ENCODE measurements at regions of chr1 and their contacts with region 1.

Region 1: GRCh38 chr1:47262787-47263413 is 30.9 kb upstream of the TAL1 start:
- DNase-seq: no peak
- H3K4me3 ChIP-seq: no peak overlapping the region
- H3K27ac ChIP-seq: no peak overlapping the region
- H3K27me3 ChIP-seq: no peaks in the 10 kb centered on the region
- CTCF ChIP-seq: peak; percentile 75

Region 2: DNA sequence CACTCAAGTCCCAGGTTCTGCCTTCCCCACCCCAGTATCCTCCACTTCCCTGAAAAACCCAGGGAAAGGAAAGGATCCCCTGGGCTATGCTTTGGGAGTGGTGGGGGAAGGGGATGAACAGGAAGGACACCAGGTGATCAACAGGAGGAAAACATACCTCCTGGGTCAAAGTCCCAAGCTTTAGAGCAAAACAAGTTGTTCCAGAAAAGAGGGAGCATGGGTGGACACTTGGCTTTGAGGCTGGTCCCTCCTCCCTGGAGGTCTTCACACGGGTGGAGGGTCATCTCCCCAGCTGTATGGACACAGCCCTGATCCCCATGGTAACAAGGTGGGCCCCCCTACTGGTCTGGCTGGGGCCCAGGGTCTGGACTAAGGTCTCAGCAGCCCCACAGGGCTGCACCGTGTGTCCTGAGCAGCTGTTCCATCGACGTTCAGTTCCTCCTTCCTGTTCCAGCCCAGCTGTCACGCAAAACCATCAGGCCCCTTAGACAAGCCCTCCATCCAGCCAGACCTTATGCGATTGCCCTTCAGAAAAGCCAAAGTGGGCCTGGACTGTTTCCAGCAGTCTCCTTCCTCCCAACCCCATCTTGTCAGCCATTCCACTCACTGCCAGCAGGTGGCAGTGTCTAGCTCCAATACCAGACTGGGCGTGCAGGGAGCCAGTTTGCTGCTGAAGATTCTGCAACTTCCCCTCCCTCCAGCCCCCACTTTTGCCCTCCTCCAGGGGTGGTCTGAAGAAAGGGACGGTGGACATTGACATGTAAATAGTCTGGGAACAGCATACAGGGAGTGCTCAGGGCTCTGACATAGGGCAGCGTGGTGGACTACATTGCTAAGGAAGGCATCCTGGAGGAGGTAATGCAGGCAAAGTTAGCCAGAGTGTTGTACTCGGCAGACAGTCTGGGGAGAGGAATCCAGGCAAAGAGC is 70.2 kb before region 1 on chr1:
- CTCF ChIA-PET with region 1: interaction called, 66 read pairs
- POLR2A ChIA-PET with region 1: no interaction called
- DNase-seq: peak; percentile 32
- H3K4me3 ChIP-seq: no peak overlapping the region
- H3K27ac ChIP-seq: no peak overlapping the region
- H3K27me3 ChIP-seq: peaks cover 7% of the 10 kb centered on the region
- CTCF ChIP-seq: peak; percentile 96

Region 3: GRCh38 chr1:47241114-47242113 is 21.5 kb before region 1 on chr1:
- CTCF ChIA-PET with region 1: interaction called, 19 read pairs
- POLR2A ChIA-PET with region 1: no interaction called
- DNase-seq: no peak
- H3K4me3 ChIP-seq: no peak overlapping the region
- H3K27ac ChIP-seq: no peak overlapping the region
- H3K27me3 ChIP-seq: peaks cover 26% of the 10 kb centered on the region
- CTCF ChIP-seq: no peak

Region 4: GRCh38 chr1:47276850-47277249 is 13.9 kb after region 1 on chr1:
- CTCF ChIA-PET with region 1: interaction called, 33 read pairs
- POLR2A ChIA-PET with region 1: no interaction called
- DNase-seq: no peak
- H3K4me3 ChIP-seq: no peak overlapping the region
- H3K27ac ChIP-seq: no peak overlapping the region
- H3K27me3 ChIP-seq: no peaks in the 10 kb centered on the region
- CTCF ChIP-seq: no peak

Region 5: GRCh38 chr1:47295579-47295978 is 32.7 kb after region 1 on chr1:
- CTCF ChIA-PET with region 1: interaction called, 10 read pairs
- POLR2A ChIA-PET with region 1: no interaction called
- DNase-seq: no peak
- H3K4me3 ChIP-seq: no peak overlapping the region
- H3K27ac ChIP-seq: no peak overlapping the region
- H3K27me3 ChIP-seq: no peaks in the 10 kb centered on the region
- CTCF ChIP-seq: no peak

Region 6: GRCh38 chr1:47313915-47314664 is 51.2 kb after region 1 on chr1 and contains the start of gene STIL:
- CTCF ChIA-PET with region 1: interaction called, 12 read pairs
- POLR2A ChIA-PET with region 1: no interaction called
- DNase-seq: peak; percentile 98
- H3K4me3 ChIP-seq: peak within 1 kb of the TSS; percentile 87
- H3K27ac ChIP-seq: peak within 1 kb of the TSS; percentile 87
- H3K27me3 ChIP-seq: no peaks in the 10 kb centered on the region
- CTCF ChIP-seq: no peak
- polyA plus RNA-seq, gene STIL: 3.5 and 6.4 TPM in 2 replicates